ENCODE measurements at regions of chr3 and their contacts with region 1.

Region 1: DNA sequence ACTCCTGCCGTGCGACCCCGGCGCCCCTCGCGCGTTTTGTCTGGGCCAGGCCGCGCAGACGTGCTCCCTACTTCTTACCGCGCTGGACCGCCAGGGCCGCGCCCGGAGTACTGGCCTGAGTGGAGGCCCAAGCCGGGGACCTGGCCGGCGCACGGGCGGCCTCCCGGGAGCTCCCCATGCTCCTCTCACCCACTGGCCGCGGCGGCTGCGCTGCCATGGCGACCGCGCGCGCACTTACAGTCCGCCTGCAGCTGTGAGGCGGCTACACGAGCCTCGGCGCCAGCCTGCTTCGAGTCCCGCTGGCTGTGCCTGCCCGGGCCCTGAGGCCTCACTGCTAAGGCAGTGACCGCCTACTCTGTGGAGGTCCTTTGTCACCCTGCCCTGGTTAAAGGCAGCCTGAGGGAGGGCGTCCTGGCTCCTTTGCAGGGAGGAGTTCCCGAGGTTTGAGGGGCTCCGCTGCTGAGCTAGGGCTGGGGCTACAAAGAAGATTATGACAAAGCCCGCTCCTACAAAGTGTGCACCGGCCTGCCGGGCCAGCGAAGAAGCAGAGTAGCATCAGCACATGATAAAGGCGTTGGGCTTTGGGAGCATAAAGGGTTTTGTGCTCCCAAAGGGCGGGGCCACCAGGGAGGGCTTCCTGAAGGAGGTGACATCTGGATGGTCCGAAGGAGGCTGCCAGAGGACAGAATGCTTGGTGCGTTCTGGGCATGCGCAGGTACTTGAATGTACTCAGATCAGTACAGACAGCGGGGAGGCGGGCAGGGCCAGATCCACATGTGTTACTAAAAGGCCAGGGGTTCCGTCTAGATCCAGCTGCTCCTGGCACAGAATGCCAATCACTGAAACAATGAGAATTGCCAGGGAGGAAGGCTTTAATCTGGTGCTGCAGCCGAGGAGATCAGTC is at the starts of genes LRRC34 and LRRIQ4:
- DNase-seq: peak; percentile 80
- ATAC-seq: peak; percentile 60
- H3K4me3 ChIP-seq: peak within 1 kb of the TSS; percentile 66 to 79 (median 69)
- H3K4me3 Mint-ChIP-seq: peak within 1 kb of the TSS; percentile 87
- H3K27ac ChIP-seq: peak within 1 kb of the TSS; percentile 46 to 77
- H3K27ac Mint-ChIP-seq: peak within 1 kb of the TSS; percentile 93
- H3K4me1 ChIP-seq: peaks cover 19 to 28% of the 10 kb centered on the region in 2 donors
- H3K4me1 Mint-ChIP-seq: peaks cover 34% of the 10 kb centered on the region
- H3K27me3 ChIP-seq: no peaks in the 10 kb centered on the region
- H3K27me3 Mint-ChIP-seq: no peaks in the 10 kb centered on the region
- CTCF ChIP-seq: no peak
- total RNA-seq, gene LRRC34: 7.1 and 11.8 TPM in 2 replicates
- total RNA-seq, gene LRRIQ4: 0.53 and 0.71 TPM in 2 replicates

Region 2: GRCh38 chr3:169710619-169711018 is 102.0 kb before region 1 on chr3:
- CTCF ChIA-PET with region 1: no interaction called
- POLR2A ChIA-PET with region 1: no interaction called
- intact Hi-C with region 1: no loop called
- DNase-seq: no peak
- ATAC-seq: no peak
- H3K4me3 ChIP-seq: no peak overlapping the region
- H3K4me3 Mint-ChIP-seq: no peak overlapping the region
- H3K27ac ChIP-seq: no peak overlapping the region
- H3K27ac Mint-ChIP-seq: no peak overlapping the region
- H3K4me1 ChIP-seq: no peaks in the 10 kb centered on the region
- H3K4me1 Mint-ChIP-seq: no peaks in the 10 kb centered on the region
- H3K27me3 ChIP-seq: peaks cover 0 to 6% (median 0%) of the 10 kb centered on the region in 4 experiments
- H3K27me3 Mint-ChIP-seq: peaks cover 15% of the 10 kb centered on the region
- CTCF ChIP-seq: no peak

Region 3: GRCh38 chr3:169772897-169773828 is 39.4 kb before region 1 on chr3 and contains the start of gene MYNN:
- CTCF ChIA-PET with region 1: interaction called, 10 read pairs
- POLR2A ChIA-PET with region 1: interaction called, 9 read pairs
- intact Hi-C with region 1: loop called (anchors 1 kb)
- DNase-seq: peak; percentile 96
- ATAC-seq: peak; percentile 78
- H3K4me3 ChIP-seq: peak within 1 kb of the TSS; percentile 89 to 97 (median 91)
- H3K4me3 Mint-ChIP-seq: peak within 1 kb of the TSS; percentile 100
- H3K27ac ChIP-seq: peak within 1 kb of the TSS; percentile 97
- H3K27ac Mint-ChIP-seq: peak within 1 kb of the TSS; percentile 99
- H3K4me1 ChIP-seq: peaks cover 16 to 19% of the 10 kb centered on the region in 2 donors
- H3K4me1 Mint-ChIP-seq: peaks cover 50% of the 10 kb centered on the region
- H3K27me3 ChIP-seq: no peaks in the 10 kb centered on the region
- H3K27me3 Mint-ChIP-seq: no peaks in the 10 kb centered on the region
- CTCF ChIP-seq: no peak
- total RNA-seq, gene MYNN: 24.0 and 25.5 TPM in 2 replicates

Region 4: GRCh38 chr3:169846458-169847193 is 34.0 kb after region 1 on chr3:
- CTCF ChIA-PET with region 1: no interaction called
- POLR2A ChIA-PET with region 1: interaction called, 5 read pairs
- intact Hi-C with region 1: loop called (anchors 1 kb)
- DNase-seq: peak; percentile 72
- ATAC-seq: peak; percentile 89
- H3K4me3 ChIP-seq: peak overlapping the region in 4 of 5 experiments; percentile 16 to 57 (median 43)
- H3K4me3 Mint-ChIP-seq: peak overlapping the region; percentile 80
- H3K27ac ChIP-seq: peak overlapping the region; percentile 68 to 74
- H3K27ac Mint-ChIP-seq: peak overlapping the region; percentile 95
- H3K4me1 ChIP-seq: peaks cover 44 to 46% of the 10 kb centered on the region in 2 donors
- H3K4me1 Mint-ChIP-seq: peaks cover 53% of the 10 kb centered on the region
- H3K27me3 ChIP-seq: no peaks in the 10 kb centered on the region
- H3K27me3 Mint-ChIP-seq: no peaks in the 10 kb centered on the region
- CTCF ChIP-seq: no peak

Region 5: GRCh38 chr3:169966428-169966950 is 153.9 kb after region 1 on chr3 and contains the start of gene SEC62:
- CTCF ChIA-PET with region 1: interaction called, 13 read pairs
- POLR2A ChIA-PET with region 1: interaction called, 5 read pairs
- intact Hi-C with region 1: loop called (anchors 1 kb)
- DNase-seq: peak; percentile 97
- ATAC-seq: peak; percentile 88
- H3K4me3 ChIP-seq: peak within 1 kb of the TSS; percentile 59 to 88 (median 85)
- H3K4me3 Mint-ChIP-seq: peak within 1 kb of the TSS; percentile 90
- H3K27ac ChIP-seq: peak within 1 kb of the TSS; percentile 98 to 99
- H3K27ac Mint-ChIP-seq: peak within 1 kb of the TSS; percentile 95
- H3K4me1 ChIP-seq: peaks cover 45 to 74% of the 10 kb centered on the region in 2 donors
- H3K4me1 Mint-ChIP-seq: peaks cover 77% of the 10 kb centered on the region
- H3K27me3 ChIP-seq: no peaks in the 10 kb centered on the region
- H3K27me3 Mint-ChIP-seq: no peaks in the 10 kb centered on the region
- CTCF ChIP-seq: peak; percentile 57
- total RNA-seq, gene SEC62: 166 and 176 TPM in 2 replicates

Region 6: GRCh38 chr3:170128977-170129431 is 316.4 kb after region 1 on chr3:
- CTCF ChIA-PET with region 1: no interaction called
- POLR2A ChIA-PET with region 1: no interaction called
- intact Hi-C with region 1: no loop called
- DNase-seq: no peak
- ATAC-seq: peak; percentile 49
- H3K4me3 ChIP-seq: peak overlapping the region in 1 of 5 experiments; percentile 1
- H3K4me3 Mint-ChIP-seq: peak overlapping the region; percentile 67
- H3K27ac ChIP-seq: peak overlapping the region; percentile 27 to 52
- H3K27ac Mint-ChIP-seq: peak overlapping the region; percentile 86
- H3K4me1 ChIP-seq: peaks cover 16 to 17% of the 10 kb centered on the region in 2 donors
- H3K4me1 Mint-ChIP-seq: peaks cover 17% of the 10 kb centered on the region
- H3K27me3 ChIP-seq: no peaks in the 10 kb centered on the region
- H3K27me3 Mint-ChIP-seq: no peaks in the 10 kb centered on the region
- CTCF ChIP-seq: no peak

Region 7: DNA sequence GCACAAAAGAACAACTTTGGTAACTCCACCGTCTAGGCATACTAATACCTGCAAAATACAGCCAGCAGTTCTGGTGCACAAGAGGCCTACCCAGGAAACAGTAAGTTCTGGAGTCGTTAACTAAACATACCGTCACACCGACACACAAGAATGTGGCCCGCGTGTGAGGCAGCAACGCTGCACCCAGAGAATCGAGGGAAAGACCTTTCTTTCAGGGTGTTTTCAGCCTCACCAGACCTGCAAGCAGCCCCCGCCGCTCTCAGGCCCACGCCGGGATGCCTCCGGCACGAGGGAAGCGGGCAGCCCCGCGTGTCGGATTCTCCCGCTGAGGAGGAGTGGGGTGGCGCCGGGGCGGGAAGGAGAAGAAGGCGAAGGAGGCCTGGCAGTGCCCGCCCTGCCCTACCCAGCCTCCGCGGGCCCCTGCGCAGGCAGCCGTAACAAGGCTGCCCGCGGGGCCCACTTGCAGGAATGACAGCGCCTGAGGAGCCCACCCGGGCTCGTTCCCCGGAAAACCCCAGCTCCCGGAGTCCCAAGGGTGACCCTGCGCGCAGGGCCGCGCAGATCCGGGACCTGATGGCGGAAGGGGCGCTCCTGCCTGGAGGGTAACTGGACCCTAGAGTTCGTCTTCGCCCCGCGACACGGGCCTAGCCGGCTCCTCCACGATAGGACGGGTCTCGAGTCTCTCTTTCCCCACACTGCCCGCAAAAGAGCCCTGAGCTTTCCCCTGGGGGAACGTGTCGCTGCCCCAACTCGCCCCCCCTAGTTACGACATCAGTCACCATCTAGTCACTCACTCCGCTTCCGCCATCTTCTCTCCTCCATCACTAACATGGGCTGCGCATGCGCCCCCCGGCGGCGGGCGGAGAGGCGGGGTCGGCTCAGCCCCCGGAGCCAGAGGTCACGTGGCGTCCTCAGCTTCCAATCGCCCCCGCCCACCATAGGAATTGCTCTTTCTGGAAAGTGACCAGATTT is 368.6 kb after region 1 on chr3 and contains the start of gene PHC3:
- CTCF ChIA-PET with region 1: no interaction called
- POLR2A ChIA-PET with region 1: no interaction called
- intact Hi-C with region 1: loop called (anchors 1 kb)
- DNase-seq: peak; percentile 95
- ATAC-seq: peak; percentile 82
- H3K4me3 ChIP-seq: peak within 1 kb of the TSS; percentile 61 to 98 (median 95)
- H3K4me3 Mint-ChIP-seq: peak within 1 kb of the TSS; percentile 98
- H3K27ac ChIP-seq: peak within 1 kb of the TSS; percentile 96 to 98
- H3K27ac Mint-ChIP-seq: peak within 1 kb of the TSS; percentile 100
- H3K4me1 ChIP-seq: peaks cover 20 to 25% of the 10 kb centered on the region in 2 donors
- H3K4me1 Mint-ChIP-seq: peaks cover 28% of the 10 kb centered on the region
- H3K27me3 ChIP-seq: no peaks in the 10 kb centered on the region
- H3K27me3 Mint-ChIP-seq: no peaks in the 10 kb centered on the region
- CTCF ChIP-seq: no peak
- total RNA-seq, gene PHC3: 159 and 165 TPM in 2 replicates

Region 8: DNA sequence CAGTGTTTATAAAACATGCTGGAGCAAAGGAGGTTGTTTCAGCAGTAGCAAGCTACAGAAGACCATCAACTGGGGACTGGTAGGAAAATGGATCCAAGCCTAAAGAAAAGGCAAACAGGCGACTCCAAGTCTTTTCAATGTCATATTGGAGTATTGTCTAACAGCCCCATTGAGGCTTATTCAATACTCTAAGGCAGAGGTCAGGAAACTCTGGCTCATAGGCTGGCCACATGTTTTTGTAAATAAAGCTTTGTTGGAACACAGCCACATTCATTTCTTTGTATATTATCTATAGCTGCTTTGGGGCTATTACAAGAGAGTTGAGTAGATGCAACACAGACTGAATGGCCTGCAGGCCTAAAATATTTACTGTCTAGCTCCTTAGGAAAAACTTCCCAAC is 979.9 kb after region 1 on chr3:
- CTCF ChIA-PET with region 1: no interaction called
- POLR2A ChIA-PET with region 1: no interaction called
- intact Hi-C with region 1: no loop called
- DNase-seq: no peak
- ATAC-seq: no peak
- H3K4me3 ChIP-seq: no peak overlapping the region
- H3K4me3 Mint-ChIP-seq: no peak overlapping the region
- H3K27ac ChIP-seq: no peak overlapping the region
- H3K27ac Mint-ChIP-seq: no peak overlapping the region
- H3K4me1 ChIP-seq: no peaks in the 10 kb centered on the region
- H3K4me1 Mint-ChIP-seq: no peaks in the 10 kb centered on the region
- H3K27me3 ChIP-seq: peaks cover 0 to 2% (median 0%) of the 10 kb centered on the region in 4 experiments
- H3K27me3 Mint-ChIP-seq: peaks cover 8% of the 10 kb centered on the region
- CTCF ChIP-seq: no peak

Measured in B cell (primary cell).